MCF 10A (cell line): ENCODE measurements at regions of chr21 and their contacts with region 1.

Region 1: GRCh38 chr21:30194701-30195299 is 21.1 kb downstream of the CLDN8 start:
- DNase-seq: peak; percentile 72
- H3K4me3 Mint-ChIP-seq: no peak overlapping the region
- H3K27ac Mint-ChIP-seq: no peak overlapping the region
- H3K4me1 Mint-ChIP-seq: no peaks in the 10 kb centered on the region
- H3K27me3 Mint-ChIP-seq: no peaks in the 10 kb centered on the region
- CTCF ChIP-seq: peak; percentile 80

Region 2: GRCh38 chr21:29939104-29939923 is 255.5 kb before region 1 on chr21:
- CTCF ChIA-PET with region 1: interaction called, 4 read pairs
- POLR2A ChIA-PET with region 1: no interaction called
- intact Hi-C with region 1: loop called (anchors 5 kb)
- DNase-seq: no peak
- H3K4me3 Mint-ChIP-seq: peak overlapping the region; percentile 32
- H3K27ac Mint-ChIP-seq: no peak overlapping the region
- H3K4me1 Mint-ChIP-seq: peaks cover 7% of the 10 kb centered on the region
- H3K27me3 Mint-ChIP-seq: peaks cover 65% of the 10 kb centered on the region
- CTCF ChIP-seq: no peak

Region 3: GRCh38 chr21:30072496-30072895 is 122.3 kb before region 1 on chr21:
- CTCF ChIA-PET with region 1: interaction called, 59 read pairs
- POLR2A ChIA-PET with region 1: no interaction called
- intact Hi-C with region 1: loop called (anchors 1 kb)
- DNase-seq: peak; percentile 73
- H3K4me3 Mint-ChIP-seq: no peak overlapping the region
- H3K27ac Mint-ChIP-seq: no peak overlapping the region
- H3K4me1 Mint-ChIP-seq: peaks cover 11% of the 10 kb centered on the region
- H3K27me3 Mint-ChIP-seq: no peaks in the 10 kb centered on the region
- CTCF ChIP-seq: peak; percentile 58

Region 4: GRCh38 chr21:30146558-30147302 is 48.1 kb before region 1 on chr21:
- CTCF ChIA-PET with region 1: no interaction called
- POLR2A ChIA-PET with region 1: no interaction called
- intact Hi-C with region 1: loop called (anchors 5 kb)
- DNase-seq: peak; percentile 91
- H3K4me3 Mint-ChIP-seq: peak overlapping the region; percentile 64
- H3K27ac Mint-ChIP-seq: peak overlapping the region; percentile 92
- H3K4me1 Mint-ChIP-seq: peaks cover 16% of the 10 kb centered on the region
- H3K27me3 Mint-ChIP-seq: no peaks in the 10 kb centered on the region
- CTCF ChIP-seq: no peak